K562 (cell line): ENCODE measurements at regions of chr3 and their contacts with region 1.

Region 1: DNA sequence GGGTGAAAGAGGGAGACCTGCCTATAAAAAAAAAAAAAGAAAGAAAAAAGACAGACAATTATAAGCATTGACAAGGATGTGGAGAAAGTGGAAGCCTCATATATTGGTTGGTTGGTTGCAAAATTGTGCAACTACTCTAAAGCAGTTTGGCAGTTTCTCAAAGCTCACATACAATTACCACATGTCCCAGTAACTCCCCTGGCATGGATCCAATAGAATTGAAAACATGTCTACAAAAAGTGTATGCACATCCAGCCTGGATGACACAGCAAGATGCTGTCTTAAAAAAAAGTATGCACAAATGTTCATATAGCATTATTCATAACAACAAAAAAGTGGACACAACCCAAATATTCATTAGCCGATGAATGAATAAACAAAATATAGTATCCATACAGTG is 19.5 kb downstream of the SETMAR start:
- DNase-seq: peak in 2 of 4 experiments; percentile 44 to 81
- ATAC-seq: peak; percentile 73
- H3K4me3 ChIP-seq: no peak overlapping the region
- H3K27ac ChIP-seq: peak overlapping the region; percentile 33; the same call in 1 of the 3 replicates
- H3K4me1 ChIP-seq: peaks cover 4 to 37% of the 10 kb centered on the region in 2 experiments; a peak in 4 of 5 replicates
- H3K27me3 ChIP-seq: no peaks in the 10 kb centered on the region
- CTCF ChIP-seq: no peak
- EP300 ChIP-seq: peak; percentile 61
- POLR2A ChIP-seq: no peak
- RAD21 ChIP-seq: no peak

Region 2: DNA sequence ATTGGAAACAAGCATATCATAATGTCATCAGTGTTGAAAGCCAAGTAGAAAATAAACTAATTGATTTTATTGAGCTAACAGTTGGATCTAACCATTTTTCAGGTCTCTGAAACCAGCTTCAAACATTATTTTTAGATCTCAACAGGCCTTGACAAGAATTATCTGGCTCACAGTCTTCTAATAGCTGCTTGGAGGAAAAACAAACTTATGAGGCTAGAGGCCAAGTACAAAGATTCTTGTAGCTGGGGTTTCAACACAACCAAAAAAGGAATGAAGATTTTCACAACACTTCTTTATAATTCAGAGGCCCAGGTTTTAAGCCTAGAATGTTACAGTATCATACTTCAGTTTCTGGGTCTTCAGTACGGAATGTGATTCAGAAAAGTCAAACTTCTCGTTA is 15.8 kb before region 1 on chr3:
- CTCF ChIA-PET with region 1: no interaction called
- POLR2A ChIA-PET with region 1: interaction called, 6 read pairs
- in situ Hi-C with region 1: no loop called
- intact Hi-C with region 1: loop called (anchors 2 kb)
- DNase-seq: no peak
- ATAC-seq: no peak
- H3K4me3 ChIP-seq: no peak overlapping the region
- H3K27ac ChIP-seq: no peak overlapping the region
- H3K4me1 ChIP-seq: peaks cover 13 to 17% of the 10 kb centered on the region in 2 experiments
- H3K27me3 ChIP-seq: no peaks in the 10 kb centered on the region
- CTCF ChIP-seq: no peak
- EP300 ChIP-seq: no peak
- POLR2A ChIP-seq: no peak
- RAD21 ChIP-seq: no peak

Region 3: GRCh38 chr3:4504340-4505261 is 182.0 kb after region 1 on chr3:
- CTCF ChIA-PET with region 1: no interaction called
- POLR2A ChIA-PET with region 1: no interaction called
- in situ Hi-C with region 1: no loop called
- intact Hi-C with region 1: no loop called
- DNase-seq: no peak
- ATAC-seq: no peak
- H3K4me3 ChIP-seq: no peak overlapping the region
- H3K27ac ChIP-seq: no peak overlapping the region
- H3K4me1 ChIP-seq: peaks cover 15 to 55% of the 10 kb centered on the region in 2 experiments
- H3K27me3 ChIP-seq: no peaks in the 10 kb centered on the region
- CTCF ChIP-seq: no peak
- EP300 ChIP-seq: no peak
- POLR2A ChIP-seq: no peak
- RAD21 ChIP-seq: 0 out of 4 replicates have a peak, but pooled peaks of 1 of the 2 experiments have one; percentile 11

Region 4: DNA sequence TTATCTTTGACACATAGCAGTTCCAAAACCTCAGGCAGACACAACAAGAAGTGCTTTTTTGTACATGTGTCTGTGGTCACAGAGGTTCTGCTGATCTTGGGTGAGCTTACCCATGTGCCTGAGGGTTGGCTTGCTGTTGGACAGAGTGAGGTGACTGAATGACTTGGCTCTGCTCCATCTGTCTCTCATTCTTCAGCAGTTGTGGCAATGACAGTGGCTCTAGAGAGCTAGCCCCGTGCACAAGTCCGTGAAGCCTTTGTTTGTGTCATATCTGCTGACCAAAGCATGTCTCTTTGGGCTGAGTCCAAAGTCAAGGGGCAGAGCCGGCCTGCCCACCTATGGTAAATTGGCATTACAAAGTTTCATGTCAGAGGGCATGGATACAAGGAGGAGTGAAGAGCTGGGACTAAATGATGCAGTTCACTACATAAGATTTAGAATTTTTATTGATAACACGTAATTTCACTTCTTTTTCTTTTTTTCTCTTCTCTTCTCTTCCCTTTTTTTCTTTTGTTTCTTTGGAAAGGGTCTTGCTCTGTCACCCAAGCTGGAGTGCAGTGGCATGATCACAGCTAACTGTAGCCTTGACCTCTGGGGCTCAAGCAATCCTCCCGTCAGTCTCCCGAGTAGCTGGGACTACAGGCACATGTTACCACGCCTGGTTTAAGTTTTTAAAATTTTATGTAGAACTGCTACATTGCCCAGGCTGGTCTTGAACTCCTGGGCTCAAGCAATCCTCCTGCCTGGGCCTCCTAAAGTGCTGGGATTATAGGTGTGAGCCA is 248.4 kb after region 1 on chr3:
- CTCF ChIA-PET with region 1: no interaction called
- POLR2A ChIA-PET with region 1: no interaction called
- in situ Hi-C with region 1: no loop called
- intact Hi-C with region 1: no loop called
- DNase-seq: peak in 1 of 4 experiments; percentile 53
- ATAC-seq: peak; percentile 70
- H3K4me3 ChIP-seq: no peak overlapping the region
- H3K27ac ChIP-seq: no peak overlapping the region
- H3K4me1 ChIP-seq: peaks cover 3 to 9% of the 10 kb centered on the region in 2 experiments; a peak in 2 of 5 replicates
- H3K27me3 ChIP-seq: no peaks in the 10 kb centered on the region; a peak in 1 of 5 replicates
- CTCF ChIP-seq: no peak
- EP300 ChIP-seq: no peak
- POLR2A ChIP-seq: no peak
- RAD21 ChIP-seq: no peak; a peak in 1 of 4 replicates